Activated CD4-positive, alpha-beta T cell treated with anti-CD3 and anti-CD28 coated beads for 36 hours (primary cell): ENCODE measurements at regions of chr11 and their contacts with region 1.

Region 1: GRCh38 chr11:128039140-128040021 is 548.0 kb downstream of the ETS1 start:
- DNase-seq: peak; percentile 88
- ATAC-seq: peak; percentile 94
- H3K4me3 Mint-ChIP-seq: peak overlapping the region; percentile 31
- H3K27ac Mint-ChIP-seq: peak overlapping the region; percentile 85
- H3K4me1 Mint-ChIP-seq: peaks cover 39% of the 10 kb centered on the region
- H3K27me3 Mint-ChIP-seq: no peaks in the 10 kb centered on the region

Region 2: GRCh38 chr11:126841999-126842398 is 1197.4 kb before region 1 on chr11:
- CTCF ChIA-PET with region 1: no interaction called
- POLR2A ChIA-PET with region 1: no interaction called
- intact Hi-C with region 1: no loop called
- DNase-seq: no peak
- ATAC-seq: no peak
- H3K4me3 Mint-ChIP-seq: no peak overlapping the region
- H3K27ac Mint-ChIP-seq: no peak overlapping the region
- H3K4me1 Mint-ChIP-seq: no peaks in the 10 kb centered on the region
- H3K27me3 Mint-ChIP-seq: peaks cover 3% of the 10 kb centered on the region

Region 3: GRCh38 chr11:128052912-128053641 is 13.7 kb after region 1 on chr11:
- CTCF ChIA-PET with region 1: interaction called, 10 read pairs
- POLR2A ChIA-PET with region 1: no interaction called
- intact Hi-C with region 1: loop called (anchors 1 to 2 kb)
- DNase-seq: no peak
- ATAC-seq: peak; percentile 63
- H3K4me3 Mint-ChIP-seq: peak overlapping the region; percentile 25
- H3K27ac Mint-ChIP-seq: peak overlapping the region; percentile 87
- H3K4me1 Mint-ChIP-seq: peaks cover 65% of the 10 kb centered on the region
- H3K27me3 Mint-ChIP-seq: no peaks in the 10 kb centered on the region

Region 4: DNA sequence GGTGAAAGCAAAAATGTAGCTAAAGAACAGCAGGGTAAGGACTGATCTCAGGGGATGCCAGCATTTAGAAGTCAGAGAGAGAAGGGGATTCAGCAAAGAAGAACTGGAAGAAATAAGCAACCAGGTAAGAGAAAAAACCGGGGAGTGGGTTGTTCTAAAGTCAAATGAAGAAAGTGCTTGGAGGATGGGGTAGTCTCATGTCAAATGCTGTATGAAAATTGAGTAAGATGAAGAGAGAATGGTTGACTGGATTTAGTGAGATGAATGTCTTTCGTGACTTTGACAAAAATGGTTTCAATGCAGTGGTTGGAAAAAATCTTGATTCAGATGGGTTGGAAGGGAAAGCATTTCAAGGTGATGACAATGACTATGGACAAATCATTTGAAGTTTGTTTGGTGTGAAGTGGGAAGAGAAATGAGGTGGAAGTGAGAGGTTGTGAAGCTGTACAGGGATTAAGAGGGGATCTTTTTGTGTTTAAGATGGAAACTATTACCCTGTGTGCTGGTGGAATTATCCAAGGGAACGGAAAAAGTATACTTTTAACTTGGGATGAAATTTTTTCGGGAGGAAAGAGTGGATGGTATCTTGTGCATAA is 64.0 kb after region 1 on chr11:
- CTCF ChIA-PET with region 1: no interaction called
- POLR2A ChIA-PET with region 1: no interaction called
- intact Hi-C with region 1: loop called in 1 of 2 experiments (anchors 1 kb)
- DNase-seq: no peak
- ATAC-seq: peak; percentile 74
- H3K4me3 Mint-ChIP-seq: no peak overlapping the region
- H3K27ac Mint-ChIP-seq: peak overlapping the region; percentile 23
- H3K4me1 Mint-ChIP-seq: peaks cover 13% of the 10 kb centered on the region
- H3K27me3 Mint-ChIP-seq: peaks cover 3% of the 10 kb centered on the region

Region 5: GRCh38 chr11:128422576-128423370 is 383.4 kb after region 1 on chr11:
- CTCF ChIA-PET with region 1: no interaction called
- POLR2A ChIA-PET with region 1: no interaction called
- intact Hi-C with region 1: loop called in 1 of 2 experiments (anchors 5 kb)
- DNase-seq: peak; percentile 97
- ATAC-seq: peak; percentile 94
- H3K4me3 Mint-ChIP-seq: peak overlapping the region; percentile 36
- H3K27ac Mint-ChIP-seq: peak overlapping the region; percentile 82
- H3K4me1 Mint-ChIP-seq: peaks cover 53% of the 10 kb centered on the region
- H3K27me3 Mint-ChIP-seq: no peaks in the 10 kb centered on the region

Region 6: GRCh38 chr11:128506999-128507611 is 467.7 kb after region 1 on chr11:
- CTCF ChIA-PET with region 1: interaction called, 3 read pairs
- POLR2A ChIA-PET with region 1: no interaction called
- intact Hi-C with region 1: loop called (anchors 10 kb)
- DNase-seq: peak; percentile 80
- ATAC-seq: peak; percentile 58
- H3K4me3 Mint-ChIP-seq: peak overlapping the region; percentile 96
- H3K27ac Mint-ChIP-seq: peak overlapping the region; percentile 98
- H3K4me1 Mint-ChIP-seq: peaks cover 89% of the 10 kb centered on the region
- H3K27me3 Mint-ChIP-seq: no peaks in the 10 kb centered on the region

Region 7: DNA sequence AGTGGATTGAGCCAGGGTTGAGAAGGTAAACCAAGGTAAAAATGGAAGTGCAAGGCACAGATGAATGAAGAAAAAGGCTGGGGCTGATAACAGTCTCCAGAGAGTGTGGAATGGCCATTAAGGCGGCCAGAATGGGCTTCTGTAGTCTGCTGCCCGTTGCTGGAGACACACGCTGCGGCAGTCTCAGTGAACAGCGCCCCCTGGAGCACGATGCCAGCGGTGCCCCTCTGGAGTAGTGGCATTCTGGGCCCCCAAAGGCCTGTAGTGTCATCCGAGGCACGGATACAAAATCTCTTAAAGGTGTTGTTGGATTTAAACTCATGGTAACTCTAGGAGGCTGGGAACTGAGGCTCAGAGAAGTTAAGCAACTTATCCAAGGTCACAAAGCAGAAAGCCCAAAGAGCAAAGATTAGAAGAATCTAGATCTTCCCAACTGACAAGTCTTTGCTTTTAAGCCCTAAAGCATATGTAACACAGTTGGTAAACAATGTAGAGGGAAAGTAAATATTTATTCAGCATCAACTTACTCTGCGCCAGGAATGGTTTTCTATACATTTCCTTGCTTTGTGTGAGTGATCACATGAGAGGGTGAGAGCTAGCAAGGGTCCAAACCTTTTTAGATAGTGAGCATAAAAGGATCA is 809.6 kb after region 1 on chr11:
- CTCF ChIA-PET with region 1: no interaction called
- POLR2A ChIA-PET with region 1: no interaction called
- intact Hi-C with region 1: loop called in 1 of 2 experiments (anchors 5 kb)
- DNase-seq: peak; percentile 84
- ATAC-seq: peak; percentile 85
- H3K4me3 Mint-ChIP-seq: no peak overlapping the region
- H3K27ac Mint-ChIP-seq: no peak overlapping the region
- H3K4me1 Mint-ChIP-seq: peaks cover 18% of the 10 kb centered on the region
- H3K27me3 Mint-ChIP-seq: no peaks in the 10 kb centered on the region